ENCODE measurements at regions of chr15 and their contacts with region 1.

Region 1: GRCh38 chr15:22838292-22839042 is at the start of gene NIPA2:
- DNase-seq: peak; percentile 98
- H3K4me3 ChIP-seq: peak within 1 kb of the TSS; percentile 93
- H3K27ac ChIP-seq: peak within 1 kb of the TSS; percentile 99
- H3K4me1 ChIP-seq: peaks cover 22% of the 10 kb centered on the region
- CTCF ChIP-seq: no peak
- total RNA-seq, gene NIPA2: 112 and 126 TPM in 2 replicates

Region 2: GRCh38 chr15:22786868-22787698 is 51.4 kb before region 1 on chr15:
- CTCF ChIA-PET with region 1: no interaction called
- POLR2A ChIA-PET with region 1: interaction called, 10 read pairs
- intact Hi-C with region 1: loop called (anchors 2 kb)
- DNase-seq: peak; percentile 63
- H3K4me3 ChIP-seq: peak overlapping the region; percentile 73
- H3K27ac ChIP-seq: peak overlapping the region; percentile 84
- H3K4me1 ChIP-seq: peaks cover 57% of the 10 kb centered on the region
- CTCF ChIP-seq: no peak

Region 3: DNA sequence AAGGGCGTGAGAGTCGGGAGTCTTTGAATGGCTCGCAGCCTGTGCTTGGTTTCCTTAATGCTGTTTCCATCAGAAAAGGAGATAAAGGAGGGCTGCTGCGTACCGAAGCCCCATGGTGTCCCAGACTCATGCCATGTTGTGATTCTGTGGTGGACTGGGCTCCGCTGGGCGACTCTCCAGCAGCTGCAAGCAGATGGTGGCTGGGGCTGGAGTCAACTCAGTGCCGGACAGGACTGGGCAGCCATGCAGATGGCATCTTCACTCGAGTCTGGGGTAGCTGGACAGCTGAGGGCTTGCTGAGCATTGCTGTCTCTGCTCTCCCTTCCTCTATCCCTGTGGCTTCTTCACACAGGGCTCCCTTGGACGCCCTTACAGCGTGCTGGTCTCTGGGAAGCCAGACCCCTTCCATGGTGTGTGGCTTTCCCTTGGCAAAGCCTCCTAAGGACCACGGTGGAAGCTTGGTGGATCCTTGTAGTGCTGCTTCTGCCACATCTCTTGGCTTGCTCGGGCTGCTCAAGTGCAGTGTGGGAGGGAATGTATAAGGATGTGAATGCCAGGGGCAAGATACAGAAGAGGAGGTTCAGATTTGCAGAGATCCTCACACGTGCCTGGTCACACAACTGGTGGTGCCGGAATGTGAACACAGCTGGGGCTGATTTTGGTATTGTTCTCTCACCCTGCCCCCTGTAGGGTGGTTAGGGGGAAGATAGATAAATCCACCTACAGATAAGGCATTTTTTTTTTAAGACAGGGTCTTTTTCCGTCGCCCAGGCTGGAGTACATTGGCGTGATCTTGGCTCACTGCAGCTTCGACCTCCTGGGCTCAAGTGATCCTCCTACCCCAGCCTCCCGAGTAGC is 43.0 kb before region 1 on chr15:
- CTCF ChIA-PET with region 1: no interaction called
- POLR2A ChIA-PET with region 1: interaction called, 25 read pairs
- intact Hi-C with region 1: loop called (anchors 1 kb)
- DNase-seq: peak; percentile 65
- H3K4me3 ChIP-seq: peak overlapping the region; percentile 56
- H3K27ac ChIP-seq: peak overlapping the region; percentile 97
- H3K4me1 ChIP-seq: peaks cover 89% of the 10 kb centered on the region
- CTCF ChIP-seq: peak; percentile 52

Region 4: GRCh38 chr15:22918056-22918455 is 79.6 kb after region 1 on chr15:
- CTCF ChIA-PET with region 1: no interaction called
- POLR2A ChIA-PET with region 1: no interaction called
- intact Hi-C with region 1: no loop called
- DNase-seq: no peak
- H3K4me3 ChIP-seq: no peak overlapping the region
- H3K27ac ChIP-seq: no peak overlapping the region
- H3K4me1 ChIP-seq: no peaks in the 10 kb centered on the region
- CTCF ChIP-seq: no peak

Region 5: GRCh38 chr15:23588268-23588667 is 749.8 kb after region 1 on chr15:
- CTCF ChIA-PET with region 1: no interaction called
- POLR2A ChIA-PET with region 1: no interaction called
- intact Hi-C with region 1: no loop called
- DNase-seq: no peak
- H3K4me3 ChIP-seq: no peak overlapping the region
- H3K27ac ChIP-seq: no peak overlapping the region
- H3K4me1 ChIP-seq: no peaks in the 10 kb centered on the region
- CTCF ChIP-seq: no peak